Dorsolateral prefrontal cortex (tissue), 120 donors: ENCODE measurements at regions of chr9 and their contacts with region 1.

Region 1: DNA sequence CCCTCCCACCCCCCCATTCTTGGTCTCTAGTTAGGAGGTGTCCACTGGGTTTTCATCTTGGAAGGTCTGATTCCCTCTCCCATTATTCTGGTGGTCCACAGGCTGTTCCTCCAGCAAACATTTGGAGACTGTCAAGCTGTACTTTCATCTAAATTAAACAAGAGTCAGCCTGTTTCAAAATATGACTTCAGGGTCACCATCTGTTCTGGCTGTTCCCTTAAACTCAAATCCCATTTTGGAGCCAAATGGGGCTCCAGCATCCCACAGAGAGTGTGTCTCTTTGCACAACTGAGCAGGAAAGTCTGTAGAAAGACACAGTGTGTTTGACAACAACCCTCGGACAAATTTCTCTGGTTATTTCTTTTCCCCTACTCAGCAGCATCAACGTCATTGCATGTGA is 20.5 kb downstream of the COL15A1 start:
- DNase-seq: peak in 1 of 10 donors; percentile 14
- H3K4me3 ChIP-seq: no peak overlapping the region
- H3K27ac ChIP-seq: no peak overlapping the region
- H3K27me3 ChIP-seq: no peaks in the 10 kb centered on the region
- CTCF ChIP-seq: no peak

Region 2: GRCh38 chr9:98913705-98914104 is 50.5 kb before region 1 on chr9:
- intact Hi-C with region 1: loop called in 1 of 2 experiments (anchors 2 kb)
- DNase-seq: no peak
- H3K4me3 ChIP-seq: no peak overlapping the region
- H3K27ac ChIP-seq: no peak overlapping the region
- H3K27me3 ChIP-seq: peaks cover 0 to 6% (median 0%) of the 10 kb centered on the region in 45 donors
- CTCF ChIP-seq: no peak